BJ (cell line): ENCODE measurements at regions of chr2 and their contacts with region 1.

Region 1: DNA sequence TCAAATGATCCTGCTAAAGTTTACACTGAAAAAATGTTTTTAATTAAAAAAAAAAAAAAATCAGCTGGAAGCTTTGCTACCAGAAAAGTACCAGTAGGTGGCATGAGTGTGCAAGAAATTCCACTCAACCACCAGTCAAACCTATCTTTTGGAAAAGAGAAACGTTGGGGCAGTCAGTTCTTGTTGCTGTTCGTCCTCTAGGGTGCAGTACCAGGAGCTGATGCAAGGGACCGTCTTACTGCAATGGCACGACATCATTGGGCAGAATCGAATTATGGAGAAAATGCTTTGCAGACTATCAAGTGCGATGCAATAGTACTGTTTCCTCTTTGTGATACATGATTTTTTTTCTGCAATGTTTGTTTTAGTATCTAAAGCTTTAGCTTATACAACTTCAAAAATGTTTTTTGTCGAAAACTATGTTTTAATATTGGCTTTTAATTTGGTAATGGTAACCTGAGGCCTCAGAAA is 18.3 kb downstream of the YPEL5 start:
- DNase-seq: peak; percentile 63
- H3K4me3 ChIP-seq: no peak overlapping the region
- H3K27me3 ChIP-seq: no peaks in the 10 kb centered on the region; the same call in 1 of the 2 replicates
- CTCF ChIP-seq: peak; percentile 87

Region 2: DNA sequence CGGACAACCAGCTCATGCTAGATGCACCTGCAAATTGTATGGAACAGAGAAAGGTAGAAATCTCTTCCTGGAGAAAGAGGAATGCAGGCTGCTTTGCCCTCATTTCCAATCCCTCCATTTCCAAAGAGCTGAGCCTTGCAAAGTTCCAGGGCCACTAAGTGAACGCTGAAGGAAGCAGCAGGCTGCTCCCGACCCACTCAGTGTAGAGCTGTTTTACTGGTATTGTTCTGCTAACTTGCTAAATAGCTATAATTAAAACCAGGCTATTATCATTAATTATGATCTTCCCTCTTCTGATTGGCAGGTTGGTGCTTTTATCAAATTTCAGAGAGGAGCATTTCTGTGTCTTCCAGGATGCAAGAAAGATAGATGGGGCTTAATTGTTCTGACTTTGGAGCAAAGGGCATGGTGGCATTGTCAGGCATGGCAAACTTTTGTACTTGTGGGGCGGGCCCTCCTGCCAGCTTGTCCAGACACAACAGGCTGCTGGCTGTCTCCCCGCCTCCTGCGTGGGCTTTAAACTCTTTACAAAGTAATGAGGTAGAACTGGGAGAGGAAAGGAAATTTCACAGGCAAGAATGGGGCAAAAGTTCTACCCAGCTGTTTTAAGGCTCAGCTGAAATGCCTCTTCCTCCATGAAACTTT is 283.9 kb before region 1 on chr2:
- CTCF ChIA-PET with region 1: no interaction called
- POLR2A ChIA-PET with region 1: no interaction called
- DNase-seq: no peak
- H3K4me3 ChIP-seq: no peak overlapping the region
- H3K27me3 ChIP-seq: no peaks in the 10 kb centered on the region
- CTCF ChIP-seq: no peak

Region 3: GRCh38 chr2:30022444-30023071 is 142.5 kb before region 1 on chr2:
- CTCF ChIA-PET with region 1: no interaction called
- POLR2A ChIA-PET with region 1: no interaction called
- DNase-seq: no peak
- H3K4me3 ChIP-seq: no peak overlapping the region
- H3K27me3 ChIP-seq: no peaks in the 10 kb centered on the region
- CTCF ChIP-seq: no peak

Region 4: GRCh38 chr2:30135541-30135940 is 29.5 kb before region 1 on chr2:
- CTCF ChIA-PET with region 1: no interaction called
- POLR2A ChIA-PET with region 1: no interaction called
- DNase-seq: no peak
- H3K4me3 ChIP-seq: no peak overlapping the region
- H3K27me3 ChIP-seq: peaks cover 13% of the 10 kb centered on the region
- CTCF ChIP-seq: no peak

Region 5: DNA sequence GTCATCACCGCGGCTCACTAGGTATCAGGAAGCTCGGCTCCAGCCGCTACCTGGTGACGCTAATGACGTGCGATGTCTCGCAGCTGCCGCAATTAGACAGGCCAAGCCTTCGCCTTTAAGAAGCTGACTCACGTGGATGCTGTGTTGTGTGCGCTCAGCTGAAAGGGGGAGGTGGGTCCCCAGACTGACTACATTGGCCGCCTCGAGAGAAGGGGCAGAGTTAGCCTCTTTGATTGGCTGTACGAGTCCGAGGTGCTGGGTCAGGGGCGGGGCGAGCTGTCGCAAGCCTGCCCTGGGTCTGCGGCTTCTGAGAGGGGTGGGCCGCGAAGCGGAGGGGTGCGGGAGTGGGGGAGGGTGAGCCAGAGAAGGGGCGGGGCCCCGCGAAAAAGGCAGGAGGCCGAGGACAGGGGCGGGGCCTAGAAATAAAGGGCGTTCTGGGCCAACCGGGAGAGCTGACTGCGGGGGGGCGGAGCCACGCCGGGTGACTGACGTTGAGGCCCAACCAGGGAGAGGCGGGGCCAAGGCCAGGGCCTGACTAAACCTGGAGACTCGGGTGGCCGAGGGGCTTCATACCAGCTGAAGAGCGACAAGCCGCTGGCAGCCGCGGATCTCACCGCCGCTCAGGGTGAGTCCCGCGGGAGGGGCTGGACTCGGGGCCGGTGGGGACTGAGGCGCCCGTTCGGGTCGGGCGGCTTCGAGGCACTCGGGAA is 18.5 kb before region 1 on chr2 and contains the start of gene YPEL5:
- CTCF ChIA-PET with region 1: interaction called, 46 read pairs
- POLR2A ChIA-PET with region 1: no interaction called
- DNase-seq: peak; percentile 98
- H3K4me3 ChIP-seq: peak within 1 kb of the TSS; percentile 99
- H3K27me3 ChIP-seq: peaks cover 4% of the 10 kb centered on the region; the same call in 1 of the 2 replicates
- CTCF ChIP-seq: no peak
- polyA plus RNA-seq, gene YPEL5: 141 and 190 TPM in 2 replicates

Region 6: DNA sequence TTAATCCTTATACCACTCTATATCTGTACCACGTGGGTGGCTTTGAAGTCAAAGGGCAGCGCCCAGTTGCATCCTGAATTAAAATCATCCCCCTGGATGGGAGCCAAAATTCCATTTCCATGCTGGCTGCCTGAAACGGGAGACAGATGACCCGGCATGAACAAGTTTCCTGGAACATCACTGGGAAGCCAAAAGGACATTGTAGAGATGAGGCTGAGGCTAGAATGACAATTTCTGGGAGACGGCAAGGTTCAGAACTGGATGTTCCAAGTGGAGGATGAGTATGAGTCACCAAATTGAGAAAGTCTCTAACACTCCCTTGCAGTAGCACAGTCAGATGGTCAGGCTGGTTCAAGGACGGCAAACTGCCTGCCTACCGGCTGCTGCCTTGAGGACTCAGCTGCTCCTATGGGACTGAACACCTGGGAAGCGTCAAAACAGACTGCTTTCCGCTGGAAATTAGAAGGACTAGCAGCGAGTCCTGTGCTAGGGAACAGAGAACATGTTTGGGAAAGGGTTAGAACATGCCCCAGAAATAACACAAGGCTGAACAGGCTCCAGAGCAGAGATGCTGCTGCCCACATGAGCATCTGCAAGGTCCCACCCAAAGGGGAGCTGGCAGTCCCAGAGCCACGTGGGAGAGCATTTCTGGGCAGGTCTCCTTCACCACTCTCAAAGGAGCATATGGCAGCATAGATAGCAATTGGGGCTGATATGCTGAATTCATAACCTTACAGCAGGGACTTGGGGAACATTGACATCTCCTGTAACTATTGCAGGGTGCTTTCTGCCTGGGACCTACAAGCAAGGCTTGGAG is 13.7 kb after region 1 on chr2:
- CTCF ChIA-PET with region 1: interaction called, 24 read pairs
- POLR2A ChIA-PET with region 1: no interaction called
- DNase-seq: peak; percentile 13
- H3K4me3 ChIP-seq: no peak overlapping the region
- H3K27me3 ChIP-seq: peaks cover 9% of the 10 kb centered on the region
- CTCF ChIP-seq: no peak

Region 7: DNA sequence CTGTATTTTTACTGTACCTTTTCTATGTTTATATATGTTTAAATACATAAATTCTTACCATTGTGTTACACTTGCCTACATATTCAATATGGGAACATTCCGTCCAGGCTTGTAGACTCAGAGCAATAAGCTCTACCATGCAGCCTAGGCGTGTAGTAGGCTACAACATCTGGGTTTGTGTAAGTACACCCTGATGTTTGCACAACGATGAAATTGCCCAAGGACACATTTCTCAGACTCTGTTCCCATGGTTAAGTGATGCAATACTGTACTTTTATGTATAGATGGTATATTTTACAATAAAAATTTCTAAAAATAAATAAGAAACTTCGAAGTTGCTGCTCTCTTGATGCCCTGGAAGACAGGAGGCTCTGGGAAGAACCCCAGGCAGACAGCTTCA is 20.1 kb after region 1 on chr2:
- CTCF ChIA-PET with region 1: interaction called, 24 read pairs
- POLR2A ChIA-PET with region 1: no interaction called
- DNase-seq: no peak
- H3K4me3 ChIP-seq: no peak overlapping the region
- H3K27me3 ChIP-seq: peaks cover 4% of the 10 kb centered on the region; the same call in 1 of the 2 replicates
- CTCF ChIP-seq: no peak

Region 8: GRCh38 chr2:30691948-30692828 is 527.1 kb after region 1 on chr2:
- CTCF ChIA-PET with region 1: interaction called, 15 read pairs
- POLR2A ChIA-PET with region 1: no interaction called
- DNase-seq: no peak
- H3K4me3 ChIP-seq: no peak overlapping the region
- H3K27me3 ChIP-seq: peaks cover 2% of the 10 kb centered on the region; the same call in 1 of the 2 replicates
- CTCF ChIP-seq: peak; percentile 47

Region 9: GRCh38 chr2:30702694-30703093 is 537.6 kb after region 1 on chr2:
- CTCF ChIA-PET with region 1: interaction called, 308 read pairs
- POLR2A ChIA-PET with region 1: no interaction called
- DNase-seq: no peak
- H3K4me3 ChIP-seq: no peak overlapping the region
- H3K27me3 ChIP-seq: no peaks in the 10 kb centered on the region; the same call in 1 of the 2 replicates
- CTCF ChIP-seq: no peak